A549 (cell line): ENCODE measurements at regions of chr2 and their contacts with region 1.

Region 1: DNA sequence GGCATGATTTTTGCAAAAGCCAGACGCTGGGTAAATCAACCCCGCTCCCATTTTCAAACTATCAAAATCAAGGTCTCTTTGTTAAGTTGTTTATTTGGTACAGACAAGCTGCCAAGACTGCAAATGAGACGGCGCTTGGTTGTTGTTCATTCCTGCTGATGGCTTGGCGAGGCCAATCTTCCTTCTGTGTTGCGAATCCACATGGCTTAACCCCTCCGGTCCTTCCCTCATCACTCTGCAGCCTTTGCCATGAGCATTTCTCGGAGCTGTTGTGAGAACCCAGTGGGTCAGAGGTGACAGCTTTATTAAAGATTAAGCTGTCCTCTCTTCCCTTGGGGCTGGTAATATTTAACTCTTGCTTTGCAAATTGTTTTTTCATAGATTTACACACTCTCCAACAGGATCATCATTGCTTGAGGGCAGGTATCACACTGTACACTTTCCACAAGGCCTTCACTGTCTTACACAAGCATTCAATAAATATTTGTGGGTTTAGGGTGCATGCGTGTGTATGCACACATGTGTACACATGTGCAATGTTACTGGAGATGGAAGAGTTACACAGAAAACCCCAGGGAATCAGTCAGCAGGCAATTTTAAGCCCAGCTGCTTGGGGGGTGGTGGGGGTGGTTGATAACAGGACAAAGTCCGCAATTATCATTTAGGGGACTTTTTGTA is 27.8 kb upstream of the KCNF1 start:
- DNase-seq: no peak
- ATAC-seq: peak in 1 of 2 experiments; percentile 44; a peak in 3 of 6 replicates
- H3K4me3 ChIP-seq: no peak overlapping the region
- H3K27ac ChIP-seq: peak overlapping the region in 1 of 2 experiments; percentile 6; a peak in 2 of 6 replicates
- H3K4me1 ChIP-seq: peaks cover 21% of the 10 kb centered on the region
- CTCF ChIP-seq: no peak
- EP300 ChIP-seq: no peak
- POLR2A ChIP-seq: no peak
- RAD21 ChIP-seq: no peak

Region 2: GRCh38 chr2:10329880-10330699 is 553.9 kb before region 1 on chr2:
- CTCF ChIA-PET with region 1: no interaction called
- POLR2A ChIA-PET with region 1: no interaction called
- DNase-seq: peak; percentile 65 to 80
- ATAC-seq: peak; percentile 60 to 75
- H3K4me3 ChIP-seq: peak overlapping the region; percentile 25
- H3K27ac ChIP-seq: peak overlapping the region; percentile 89 to 92
- H3K4me1 ChIP-seq: peaks cover 87% of the 10 kb centered on the region
- CTCF ChIP-seq: no peak
- EP300 ChIP-seq: no peak
- POLR2A ChIP-seq: no peak
- RAD21 ChIP-seq: no peak; a peak in 1 of 5 replicates

Region 3: DNA sequence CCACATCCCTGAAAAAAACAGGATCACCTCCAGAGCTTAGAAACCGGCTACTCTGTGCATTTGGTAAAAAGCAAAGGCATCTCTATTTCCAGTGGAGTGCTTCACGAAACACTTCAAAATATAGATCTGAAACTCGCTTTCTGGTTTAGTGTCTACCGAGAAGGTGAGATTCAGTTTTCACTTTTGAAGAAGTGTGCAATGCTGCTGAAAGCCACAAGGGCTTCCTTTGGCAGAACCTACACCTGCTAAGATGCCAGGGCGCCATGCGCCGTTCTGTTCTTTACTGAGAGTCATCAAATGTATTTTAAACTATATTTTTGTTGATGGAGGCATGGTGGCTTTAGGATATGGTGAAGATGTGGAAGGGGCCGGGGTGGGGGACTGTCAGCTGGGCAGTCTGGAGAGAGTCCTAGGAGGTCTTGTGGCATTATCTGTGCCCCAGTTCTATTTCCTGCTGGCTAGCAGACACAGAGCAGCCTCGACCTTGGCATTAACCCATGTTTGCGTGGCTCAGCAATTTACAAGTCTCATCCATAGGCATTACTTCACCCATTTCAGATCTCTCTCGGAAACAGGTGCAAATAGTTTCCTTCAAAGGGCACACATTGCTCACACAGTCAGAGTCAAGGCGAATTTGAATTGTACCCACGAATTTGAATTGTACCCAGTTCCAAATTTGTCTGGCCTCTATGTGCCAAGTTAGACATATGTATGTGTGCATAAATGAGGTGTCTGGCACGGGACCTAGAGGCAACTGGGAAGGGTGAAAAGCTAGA is 18.9 kb before region 1 on chr2:
- CTCF ChIA-PET with region 1: interaction called, 10 read pairs
- POLR2A ChIA-PET with region 1: no interaction called
- DNase-seq: no peak
- ATAC-seq: peak; percentile 36 to 69; a peak in 3 of 6 replicates
- H3K4me3 ChIP-seq: no peak overlapping the region
- H3K27ac ChIP-seq: no peak overlapping the region
- H3K4me1 ChIP-seq: no peaks in the 10 kb centered on the region; the same call in 2 of the 3 replicates
- CTCF ChIP-seq: no peak
- EP300 ChIP-seq: no peak
- POLR2A ChIP-seq: no peak
- RAD21 ChIP-seq: no peak

Region 4: DNA sequence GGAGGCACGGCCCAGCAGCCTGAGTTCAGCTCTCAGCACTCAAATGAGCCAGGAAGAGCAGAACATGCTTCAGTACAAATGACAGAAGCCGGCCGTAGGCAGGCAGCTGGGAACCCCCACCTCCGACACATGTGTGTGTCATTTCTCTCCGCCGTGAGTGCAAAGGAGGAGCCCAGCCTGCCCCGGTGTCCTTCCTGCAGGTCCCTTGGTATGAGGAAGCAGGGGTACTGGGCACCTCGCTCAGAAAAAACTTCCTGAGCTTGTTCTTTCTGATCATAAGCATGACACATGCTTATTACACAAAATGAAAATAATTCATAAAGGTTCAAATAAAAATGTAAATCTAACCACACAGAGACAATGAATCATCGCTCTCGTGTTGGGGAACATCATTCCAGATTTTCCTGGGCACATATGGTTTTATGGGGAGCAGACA is 63.1 kb after region 1 on chr2:
- CTCF ChIA-PET with region 1: no interaction called
- POLR2A ChIA-PET with region 1: no interaction called
- DNase-seq: no peak
- ATAC-seq: no peak
- H3K4me3 ChIP-seq: no peak overlapping the region
- H3K27ac ChIP-seq: no peak overlapping the region
- H3K4me1 ChIP-seq: peaks cover 5% of the 10 kb centered on the region; the same call in 1 of the 3 replicates
- CTCF ChIP-seq: no peak
- EP300 ChIP-seq: no peak
- POLR2A ChIP-seq: no peak
- RAD21 ChIP-seq: no peak

Region 5: DNA sequence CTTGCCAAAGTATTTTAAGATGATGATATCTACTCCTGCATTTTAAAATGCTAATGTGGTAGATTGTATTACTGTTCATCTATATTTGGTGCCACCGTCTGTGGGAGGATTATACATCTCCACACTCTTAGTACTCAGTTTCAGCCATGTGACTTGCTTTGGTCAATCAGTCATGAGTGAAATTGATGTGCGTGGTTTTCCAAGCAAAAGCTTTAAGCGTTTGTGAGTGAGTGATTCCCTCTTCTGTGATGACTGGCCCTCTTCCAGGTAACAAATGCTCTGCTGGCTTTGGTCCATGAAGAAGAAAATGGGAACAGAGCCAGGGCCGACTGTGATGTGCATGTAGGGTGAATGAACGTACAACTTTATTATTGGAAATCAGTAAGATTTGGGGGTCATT is 1192.9 kb after region 1 on chr2:
- CTCF ChIA-PET with region 1: no interaction called
- POLR2A ChIA-PET with region 1: no interaction called
- DNase-seq: no peak
- ATAC-seq: no peak
- H3K4me3 ChIP-seq: no peak overlapping the region
- H3K27ac ChIP-seq: no peak overlapping the region
- H3K4me1 ChIP-seq: no peaks in the 10 kb centered on the region
- CTCF ChIP-seq: no peak
- EP300 ChIP-seq: no peak
- POLR2A ChIP-seq: no peak
- RAD21 ChIP-seq: no peak